ENCODE measurements at regions of chr11 and their contacts with region 1.

Region 1: GRCh38 chr11:12235947-12236743 is 125.8 kb downstream of the MICAL2 start:
- DNase-seq: peak; percentile 32
- ATAC-seq: peak; percentile 74
- H3K4me3 ChIP-seq: no peak overlapping the region
- H3K27ac ChIP-seq: peak overlapping the region; percentile 73
- H3K4me1 ChIP-seq: peaks cover 13% of the 10 kb centered on the region
- H3K27me3 ChIP-seq: no peaks in the 10 kb centered on the region
- CTCF ChIP-seq: peak; percentile 77

Region 2: GRCh38 chr11:12122083-12122482 is 114.1 kb before region 1 on chr11:
- CTCF ChIA-PET with region 1: no interaction called
- POLR2A ChIA-PET with region 1: no interaction called
- in situ Hi-C with region 1: no loop called
- intact Hi-C with region 1: loop called (anchors 10 kb)
- DNase-seq: no peak
- ATAC-seq: peak; percentile 60; the same call in 1 of the 2 replicates
- H3K4me3 ChIP-seq: no peak overlapping the region
- H3K27ac ChIP-seq: no peak overlapping the region
- H3K4me1 ChIP-seq: peaks cover 55% of the 10 kb centered on the region
- H3K27me3 ChIP-seq: no peaks in the 10 kb centered on the region
- CTCF ChIP-seq: peak; percentile 74

Region 3: DNA sequence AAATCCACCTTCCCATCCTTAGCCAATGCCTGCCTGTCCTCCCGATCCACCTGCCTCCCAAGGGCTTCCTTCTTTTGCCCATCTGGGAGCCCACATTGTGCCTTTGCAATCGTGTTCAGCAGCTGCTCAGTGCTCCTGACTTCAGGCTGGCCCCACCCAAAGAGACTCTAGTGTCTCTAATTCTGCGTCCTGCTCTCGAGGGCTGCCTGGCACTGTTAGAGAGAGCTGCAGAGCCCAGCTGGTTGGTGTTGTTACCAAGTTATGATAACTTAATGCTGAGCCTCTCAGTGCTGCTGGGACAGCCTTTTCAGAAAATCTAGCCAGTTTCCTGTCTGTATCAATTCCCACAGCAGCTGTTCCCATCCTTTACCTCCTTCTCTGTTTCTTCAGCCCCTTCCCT is 56.6 kb before region 1 on chr11:
- CTCF ChIA-PET with region 1: no interaction called
- POLR2A ChIA-PET with region 1: no interaction called
- in situ Hi-C with region 1: no loop called
- intact Hi-C with region 1: no loop called
- DNase-seq: no peak
- ATAC-seq: peak; percentile 13; the same call in 1 of the 2 replicates
- H3K4me3 ChIP-seq: no peak overlapping the region
- H3K27ac ChIP-seq: peak overlapping the region; percentile 80
- H3K4me1 ChIP-seq: peaks cover 67% of the 10 kb centered on the region
- H3K27me3 ChIP-seq: no peaks in the 10 kb centered on the region
- CTCF ChIP-seq: no peak